ENCODE measurements at regions of chr11 and their contacts with region 1.

Region 1: DNA sequence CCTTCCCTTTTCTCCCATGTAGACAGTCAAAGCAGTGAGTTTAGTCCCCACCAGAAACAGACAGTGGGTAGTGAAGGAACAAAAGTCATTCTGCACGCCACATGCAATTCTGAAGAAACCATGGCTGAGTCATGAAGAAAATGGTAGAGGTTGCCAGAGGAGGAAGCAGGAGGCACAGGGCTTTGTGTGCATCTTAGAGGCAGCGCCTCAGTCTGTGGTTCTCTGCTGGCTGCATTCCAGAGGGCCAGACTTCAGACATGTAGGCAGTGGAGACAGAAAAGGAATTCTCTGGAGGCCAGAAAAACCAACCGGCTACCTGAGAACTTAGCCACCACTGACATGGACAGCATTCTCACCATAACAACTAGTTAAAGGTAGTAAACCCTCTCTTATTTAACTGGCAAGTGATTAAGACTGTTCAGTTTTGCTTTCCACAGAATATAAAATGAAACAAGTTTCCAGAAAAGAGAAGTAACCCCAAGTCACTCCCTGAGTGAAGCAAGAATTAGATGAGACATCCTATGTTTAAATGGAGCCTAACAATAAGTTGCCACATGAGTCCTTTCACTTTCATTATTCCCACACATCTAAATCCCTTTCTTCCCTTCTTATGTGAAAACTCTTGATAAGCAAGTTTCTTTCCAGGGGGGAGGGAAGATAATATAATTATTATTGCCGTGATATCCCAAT is 556.1 kb downstream of the SOX6 start:
- DNase-seq: peak in 39 of 42 donors; percentile 7 to 73 (median 42)

Region 2: GRCh38 chr11:15473954-15474837 is 326.1 kb before region 1 on chr11:
- intact Hi-C with region 1: no loop called
- DNase-seq: no peak

Region 3: GRCh38 chr11:15650105-15650938 is 149.9 kb before region 1 on chr11:
- intact Hi-C with region 1: loop called (anchors 10 kb)
- DNase-seq: peak; percentile 77 to 94 (median 90)